Lower leg skin (tissue), 4 donors: ENCODE measurements at regions of chr6 and their contacts with region 1.

Region 1: DNA sequence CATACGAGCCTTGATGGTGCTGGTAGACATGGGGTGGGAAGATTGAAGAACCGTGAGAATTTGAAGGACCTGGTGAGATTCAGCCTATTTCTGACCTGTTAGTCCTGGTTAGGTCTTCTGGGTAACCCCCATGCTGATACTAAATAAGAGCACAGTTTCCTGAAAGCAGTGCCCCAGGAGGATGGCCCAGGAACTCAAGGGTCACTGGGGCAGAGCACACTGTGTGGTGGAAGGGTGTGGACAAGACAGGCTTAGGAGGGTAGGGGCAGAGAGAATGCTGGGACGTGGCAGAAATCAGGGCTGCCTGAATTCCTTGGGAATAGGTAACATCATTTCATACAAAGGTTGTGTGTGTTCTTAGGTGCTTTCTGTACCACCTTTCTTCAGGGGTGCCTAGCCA is 31.9 kb upstream of the ENPP1 start:
- DNase-seq: no peak
- H3K4me3 ChIP-seq: no peak overlapping the region
- CTCF ChIP-seq: no peak
- POLR2A ChIP-seq: no peak

Region 2: GRCh38 chr6:131615275-131615674 is 160.6 kb before region 1 on chr6:
- intact Hi-C with region 1: loop called (anchors 2 kb)
- DNase-seq: no peak
- H3K4me3 ChIP-seq: no peak overlapping the region
- CTCF ChIP-seq: no peak
- POLR2A ChIP-seq: no peak